ENCODE measurements at regions of chr2 and their contacts with region 1.

Region 1: DNA sequence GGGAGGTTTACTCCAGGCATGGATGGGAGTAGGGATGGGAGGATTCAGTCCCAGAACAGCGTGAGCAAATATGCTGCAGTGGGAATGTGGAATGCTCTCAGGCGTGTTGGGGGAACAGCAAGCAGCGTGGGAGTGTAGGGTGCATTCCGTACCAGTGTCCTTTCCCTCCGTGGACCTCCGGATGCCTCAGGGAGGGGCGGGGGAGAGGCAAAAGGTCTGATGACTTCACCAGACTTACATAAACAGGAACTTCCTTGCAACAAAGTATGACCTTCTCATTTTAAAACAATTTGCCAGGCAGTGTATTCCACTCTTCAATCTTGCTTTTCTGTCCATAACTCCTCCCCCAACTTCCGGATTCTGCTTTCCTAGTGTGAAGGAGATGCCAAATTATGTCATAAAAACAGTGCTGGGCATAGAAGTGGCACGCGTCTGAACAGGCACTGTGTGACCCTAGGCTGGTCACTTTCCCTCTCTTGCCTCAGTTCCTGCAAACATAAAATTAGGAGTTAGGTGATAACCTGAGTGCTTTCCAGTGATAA is 36.9 kb downstream of the RPL37A start:
- DNase-seq: peak; percentile 81 to 92
- ATAC-seq: peak; percentile 87
- H3K4me3 ChIP-seq: no peak overlapping the region
- H3K27ac ChIP-seq: peak overlapping the region; percentile 84 to 98
- H3K4me1 ChIP-seq: peaks cover 0 to 10% of the 10 kb centered on the region in 2 donors
- H3K27me3 ChIP-seq: no peaks in the 10 kb centered on the region

Region 2: DNA sequence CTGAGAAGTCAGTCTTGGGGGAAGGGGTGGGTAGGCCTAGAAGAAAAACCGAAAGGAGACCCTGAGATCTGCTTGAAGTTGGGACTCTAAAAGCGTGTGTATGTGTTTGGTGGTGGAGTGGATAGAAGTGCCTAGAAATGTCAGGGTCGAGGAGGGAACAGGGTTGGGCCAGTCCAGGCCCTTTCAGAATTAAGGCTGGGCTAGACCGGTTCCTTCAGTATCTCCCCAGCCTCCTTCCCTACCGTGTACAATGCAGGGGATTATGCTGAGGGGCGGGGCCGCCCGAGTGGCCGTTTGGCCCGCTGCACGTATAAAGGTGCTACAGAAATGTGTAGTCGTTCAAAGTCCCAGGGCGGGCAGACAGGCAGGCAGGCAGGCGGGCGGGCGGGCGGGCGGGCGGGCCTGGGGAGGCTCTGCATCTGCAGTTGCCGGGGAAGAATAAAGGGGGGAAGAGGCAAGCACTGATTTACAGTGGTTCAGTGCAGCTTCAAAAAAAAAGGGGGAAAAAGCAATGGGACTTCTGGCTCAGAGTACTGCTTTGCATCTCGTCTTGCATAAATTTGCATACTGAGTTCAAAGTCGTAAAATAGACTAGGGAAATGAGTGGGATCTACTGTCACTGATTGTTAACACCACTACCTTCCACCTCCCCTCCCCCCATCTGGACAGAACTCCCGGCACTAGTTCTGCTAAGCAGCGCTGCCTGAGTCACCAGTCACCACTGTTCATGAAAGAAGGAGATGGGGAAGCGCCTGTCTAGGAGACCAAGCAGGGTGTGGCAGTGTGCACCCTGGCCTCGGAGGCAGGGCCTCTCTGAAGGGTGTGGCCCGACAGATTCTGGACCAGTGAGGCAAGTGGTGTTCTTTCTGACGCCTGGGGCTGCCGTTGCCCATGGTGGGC is 101.3 kb after region 1 on chr2:
- intact Hi-C with region 1: loop called (anchors 5 kb)
- DNase-seq: peak; percentile 73 to 83
- ATAC-seq: peak; percentile 47
- H3K4me3 ChIP-seq: peak overlapping the region; percentile 96 to 99
- H3K27ac ChIP-seq: peak overlapping the region; percentile 37 to 93
- H3K4me1 ChIP-seq: no peaks in the 10 kb centered on the region
- H3K27me3 ChIP-seq: no peaks in the 10 kb centered on the region

Measured in aorta (tissue), 5 donors.